ENCODE measurements at regions of chr12 and their contacts with region 1.

Region 1: DNA sequence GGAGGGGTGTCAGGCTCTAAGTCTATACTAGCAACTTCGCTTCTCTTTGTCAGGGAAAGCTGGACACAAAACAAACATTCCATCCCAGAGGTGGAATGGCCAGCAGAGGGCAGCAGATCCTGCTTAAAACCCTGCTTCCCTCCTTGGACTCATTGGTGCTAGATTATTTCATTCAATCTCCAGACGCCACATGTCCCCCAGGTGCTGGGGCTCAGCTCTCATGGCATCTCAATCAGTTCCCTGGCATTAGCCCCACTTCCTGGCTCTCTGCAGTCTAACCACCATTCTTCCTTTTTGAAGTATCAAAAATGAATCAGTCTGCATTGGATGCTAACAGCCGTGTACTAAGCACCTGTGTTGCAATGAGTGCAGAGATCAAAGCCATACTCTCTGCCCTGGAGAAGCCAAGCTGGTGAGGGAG is 8.1 kb upstream of the PPP1R1A start:
- DNase-seq: peak; percentile 78 to 89
- ATAC-seq: peak; percentile 45
- H3K4me3 ChIP-seq: no peak overlapping the region
- H3K27ac ChIP-seq: no peak overlapping the region
- H3K4me1 ChIP-seq: no peaks in the 10 kb centered on the region
- H3K27me3 ChIP-seq: no peaks in the 10 kb centered on the region

Region 2: DNA sequence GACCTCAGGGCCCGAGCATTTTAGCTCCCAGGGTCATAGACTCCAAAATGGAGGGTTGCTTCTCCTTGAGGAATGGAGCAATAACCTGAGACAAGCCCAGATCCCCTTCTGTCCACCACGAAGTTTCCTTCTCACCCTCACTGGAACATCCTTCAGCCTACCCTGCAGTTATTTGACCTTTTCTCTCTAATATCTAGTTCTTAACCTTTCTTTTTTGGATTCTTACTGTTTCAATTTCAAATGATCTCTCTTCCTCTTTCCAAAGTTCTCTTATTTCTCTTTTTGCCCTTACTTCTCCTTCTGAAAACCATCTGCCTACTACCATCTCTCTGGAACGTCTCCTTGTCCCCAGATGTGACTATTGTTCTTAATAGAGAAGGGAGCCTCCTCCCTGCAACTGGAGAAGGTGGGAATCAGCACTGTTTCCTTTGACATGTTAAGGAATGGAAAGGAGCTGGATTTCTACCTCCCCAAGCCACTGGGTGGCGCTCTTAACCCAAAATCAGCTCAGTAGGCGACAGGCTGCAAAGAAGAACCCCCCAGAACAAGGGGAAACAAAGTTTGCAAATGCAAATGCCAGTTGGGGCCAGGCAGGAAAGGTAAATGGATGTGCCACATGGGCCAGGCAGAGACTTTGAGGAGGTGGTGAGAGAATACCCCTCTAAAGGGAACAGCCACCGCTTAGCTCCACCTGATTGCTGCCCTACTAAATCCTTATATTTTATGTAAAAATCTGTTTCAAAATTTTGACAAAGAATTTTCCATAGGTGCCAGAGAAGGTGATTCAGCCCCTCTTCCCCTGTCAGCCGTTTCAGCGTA is 69.5 kb before region 1 on chr12:
- intact Hi-C with region 1: loop called in 1 of 2 experiments (anchors 10 kb)
- DNase-seq: peak in 1 of 2 donors; percentile 77
- ATAC-seq: no peak
- H3K4me3 ChIP-seq: no peak overlapping the region
- H3K27ac ChIP-seq: no peak overlapping the region
- H3K4me1 ChIP-seq: no peaks in the 10 kb centered on the region
- H3K27me3 ChIP-seq: peaks cover 0 to 2% of the 10 kb centered on the region in 2 donors

Region 3: DNA sequence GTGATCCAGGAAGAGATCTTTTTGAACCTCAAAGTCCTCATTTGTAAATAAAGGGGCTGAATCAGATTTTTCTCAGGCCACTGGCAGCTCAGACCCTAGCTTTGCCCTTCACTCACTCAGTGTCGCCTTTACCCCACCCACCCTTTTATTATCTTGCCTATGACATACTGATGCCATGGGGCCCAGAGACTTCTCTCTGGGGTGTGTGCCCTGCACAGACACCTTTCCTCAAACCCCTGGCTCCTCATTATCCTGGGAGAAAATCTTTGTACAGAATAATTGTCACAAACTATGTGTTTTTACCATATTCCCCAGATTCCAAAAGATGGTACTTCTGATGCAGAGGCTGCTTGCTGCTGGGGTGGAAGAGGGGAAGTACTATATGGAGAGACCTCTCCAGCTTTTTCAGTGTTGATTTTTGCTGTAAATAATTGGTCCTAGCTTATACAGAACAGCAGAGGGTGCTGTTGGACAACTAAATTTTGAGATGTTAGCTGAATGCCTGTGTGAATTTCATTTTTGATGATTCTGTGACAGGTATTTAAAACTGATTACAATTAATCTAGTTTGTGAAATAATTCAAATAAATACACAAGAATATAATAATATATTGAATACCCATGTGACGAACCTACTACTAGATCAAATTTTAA is 105.5 kb after region 1 on chr12:
- intact Hi-C with region 1: no loop called
- DNase-seq: no peak
- ATAC-seq: no peak
- H3K4me3 ChIP-seq: no peak overlapping the region
- H3K27ac ChIP-seq: no peak overlapping the region
- H3K4me1 ChIP-seq: no peaks in the 10 kb centered on the region
- H3K27me3 ChIP-seq: no peaks in the 10 kb centered on the region